Vagina (tissue), 2 donors: ENCODE measurements at regions of chr2 and their contacts with region 1.

Region 1: GRCh38 chr2:38274286-38275276 is 102.5 kb downstream of the ATL2 start:
- DNase-seq: no peak
- H3K4me3 ChIP-seq: no peak overlapping the region
- H3K27ac ChIP-seq: no peak overlapping the region
- H3K4me1 ChIP-seq: no peaks in the 10 kb centered on the region
- H3K27me3 ChIP-seq: no peaks in the 10 kb centered on the region
- CTCF ChIP-seq: peak; percentile 83 to 89 (median 87)
- POLR2A ChIP-seq: no peak

Region 2: DNA sequence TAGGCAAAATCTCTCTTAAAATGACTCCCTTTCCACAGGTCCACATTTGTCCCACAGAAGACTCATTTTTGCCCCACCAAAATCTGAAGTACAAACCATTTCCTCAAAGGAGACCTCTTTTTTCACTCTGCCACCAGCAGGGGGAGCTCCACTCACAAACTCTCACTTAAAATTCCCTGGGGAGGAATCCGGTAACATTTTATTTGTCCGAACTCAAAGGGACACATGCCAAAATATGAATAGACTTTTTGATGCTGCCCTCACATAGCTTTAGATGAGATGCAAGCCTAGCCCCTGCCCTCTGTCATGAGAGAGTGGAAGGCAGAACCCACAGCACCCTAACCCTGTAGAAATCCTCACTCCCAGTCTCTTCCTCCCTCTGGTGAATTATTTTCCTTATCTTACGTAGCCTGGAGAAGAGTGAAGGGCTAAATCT is 292.4 kb before region 1 on chr2:
- intact Hi-C with region 1: loop called (anchors 2 kb)
- DNase-seq: no peak
- H3K4me3 ChIP-seq: no peak overlapping the region
- H3K27ac ChIP-seq: no peak overlapping the region
- H3K4me1 ChIP-seq: no peaks in the 10 kb centered on the region
- H3K27me3 ChIP-seq: no peaks in the 10 kb centered on the region
- CTCF ChIP-seq: peak; percentile 75 to 83 (median 78)
- POLR2A ChIP-seq: no peak

Region 3: GRCh38 chr2:38026846-38027245 is 247.7 kb before region 1 on chr2:
- intact Hi-C with region 1: no loop called
- DNase-seq: no peak
- H3K4me3 ChIP-seq: no peak overlapping the region
- H3K27ac ChIP-seq: no peak overlapping the region
- H3K4me1 ChIP-seq: no peaks in the 10 kb centered on the region
- H3K27me3 ChIP-seq: no peaks in the 10 kb centered on the region
- CTCF ChIP-seq: no peak
- POLR2A ChIP-seq: no peak

Region 4: DNA sequence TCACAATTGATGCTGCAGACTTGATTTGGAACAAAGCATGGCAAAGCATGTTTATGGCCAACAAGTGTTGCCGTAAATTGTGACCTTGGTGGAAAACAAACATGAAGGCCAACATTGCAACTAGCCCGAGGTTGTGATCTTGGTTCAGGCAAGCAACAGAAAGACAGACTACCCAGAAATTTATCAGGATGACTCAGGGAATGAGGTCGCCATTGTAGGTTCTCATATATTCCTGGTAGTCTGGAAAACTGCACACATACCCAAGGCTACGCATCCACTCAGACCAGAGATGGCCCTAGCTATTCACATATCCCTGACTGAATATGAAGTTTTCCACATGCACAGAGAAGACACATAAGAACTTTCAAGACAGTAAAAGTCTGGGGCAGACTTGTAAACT is 228.8 kb before region 1 on chr2:
- intact Hi-C with region 1: no loop called
- DNase-seq: no peak
- H3K4me3 ChIP-seq: no peak overlapping the region
- H3K27ac ChIP-seq: no peak overlapping the region
- H3K4me1 ChIP-seq: no peaks in the 10 kb centered on the region
- H3K27me3 ChIP-seq: no peaks in the 10 kb centered on the region
- CTCF ChIP-seq: no peak
- POLR2A ChIP-seq: no peak